ENCODE measurements at regions of chr19 and their contacts with region 1.

Region 1: DNA sequence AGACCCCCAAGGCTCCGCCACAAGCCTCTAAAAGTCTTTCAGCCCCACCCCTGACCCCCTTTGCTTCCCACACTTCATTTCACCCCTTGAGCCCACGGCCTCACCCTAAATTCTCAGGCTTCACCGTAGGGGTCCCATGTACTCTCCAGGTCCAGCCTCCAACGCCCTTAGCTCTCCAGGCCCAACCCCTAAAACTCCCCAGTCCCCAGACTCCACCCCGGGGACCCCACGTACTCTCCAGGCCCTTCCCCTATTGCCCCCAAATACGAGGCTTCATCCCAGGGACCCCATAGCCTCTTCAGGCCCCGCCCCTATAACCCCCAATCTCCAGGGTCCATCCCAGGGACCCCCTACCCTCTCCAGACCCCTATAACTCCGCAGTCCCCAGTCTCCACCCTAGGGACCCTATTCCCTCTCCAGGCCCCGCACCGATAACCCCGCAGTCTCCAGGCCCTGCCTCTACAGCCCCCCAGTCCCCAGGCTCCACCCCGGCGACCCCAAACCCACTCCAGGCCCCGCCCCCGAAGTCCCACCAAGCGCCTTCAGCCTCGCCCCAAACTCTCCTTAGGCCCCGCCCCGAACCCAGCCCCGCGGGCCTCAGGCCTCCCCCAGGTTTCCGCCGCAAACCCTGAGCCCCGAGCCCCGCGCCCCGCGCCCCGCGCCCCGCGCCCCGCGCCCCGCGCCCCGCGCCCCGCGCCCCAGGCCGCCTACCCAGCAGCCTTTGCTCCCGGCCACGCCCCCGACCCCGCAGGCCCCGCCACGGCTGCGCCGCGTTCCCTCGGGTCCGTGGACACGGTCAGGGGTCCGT is 540 bp downstream of the MED16 start:
- DNase-seq: no peak
- H3K4me3 Mint-ChIP-seq: peak overlapping the region; percentile 83
- H3K27ac Mint-ChIP-seq: peak overlapping the region; percentile 74
- H3K4me1 Mint-ChIP-seq: peaks cover 11% of the 10 kb centered on the region
- H3K27me3 Mint-ChIP-seq: peaks cover 3% of the 10 kb centered on the region

Region 2: GRCh38 chr19:872266-872951 is 20.0 kb before region 1 on chr19:
- CTCF ChIA-PET with region 1: no interaction called
- POLR2A ChIA-PET with region 1: no interaction called
- intact Hi-C with region 1: loop called (anchors 2 kb)
- DNase-seq: peak; percentile 88
- H3K4me3 Mint-ChIP-seq: peak overlapping the region; percentile 51
- H3K27ac Mint-ChIP-seq: peak overlapping the region; percentile 62
- H3K4me1 Mint-ChIP-seq: peaks cover 9% of the 10 kb centered on the region
- H3K27me3 Mint-ChIP-seq: no peaks in the 10 kb centered on the region

Region 3: GRCh38 chr19:913080-913748 is 20.8 kb after region 1 on chr19 and contains the start of gene R3HDM4:
- CTCF ChIA-PET with region 1: interaction called, 3 read pairs
- POLR2A ChIA-PET with region 1: interaction called, 7 read pairs
- intact Hi-C with region 1: loop called (anchors 1 kb)
- DNase-seq: peak; percentile 89
- H3K4me3 Mint-ChIP-seq: peak within 1 kb of the TSS; percentile 80
- H3K27ac Mint-ChIP-seq: peak within 1 kb of the TSS; percentile 92
- H3K4me1 Mint-ChIP-seq: peaks cover 31% of the 10 kb centered on the region
- H3K27me3 Mint-ChIP-seq: no peaks in the 10 kb centered on the region
- total RNA-seq, gene R3HDM4: 80.4 to 81.4 TPM

Measured in activated CD4-positive, alpha-beta memory T cell treated with anti-CD3 and anti-CD28 coated beads for 36 hours (primary cell).